PC-3 (cell line): ENCODE measurements at regions of chr1 and their contacts with region 1.

Region 1: DNA sequence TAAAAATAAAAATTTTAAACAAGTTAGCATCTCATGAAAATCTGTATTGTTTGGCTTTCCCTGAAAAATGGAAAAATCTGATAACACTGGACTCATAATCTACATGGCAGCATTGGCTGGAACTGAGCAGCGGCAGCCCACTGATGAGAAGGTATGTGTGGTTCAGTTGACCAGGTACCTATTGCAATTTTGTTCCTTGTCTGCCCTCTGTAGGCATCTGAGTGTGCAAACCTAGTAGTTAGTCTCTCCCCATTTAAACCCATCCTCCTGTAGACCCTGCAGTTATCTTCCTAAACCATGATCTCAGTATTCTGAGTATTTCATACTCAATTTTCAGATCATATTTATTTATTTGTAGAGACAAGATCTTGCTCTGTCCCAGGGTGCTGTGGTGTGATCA is 59.4 kb upstream of the SERBP1 start:
- DNase-seq: peak; percentile 42
- ATAC-seq: peak; percentile 86
- H3K4me3 ChIP-seq: no peak overlapping the region
- H3K27ac ChIP-seq: no peak overlapping the region
- H3K4me1 ChIP-seq: no peaks in the 10 kb centered on the region
- H3K27me3 ChIP-seq: no peaks in the 10 kb centered on the region
- CTCF ChIP-seq: peak; percentile 55; the same call in 1 of the 2 replicates

Region 2: DNA sequence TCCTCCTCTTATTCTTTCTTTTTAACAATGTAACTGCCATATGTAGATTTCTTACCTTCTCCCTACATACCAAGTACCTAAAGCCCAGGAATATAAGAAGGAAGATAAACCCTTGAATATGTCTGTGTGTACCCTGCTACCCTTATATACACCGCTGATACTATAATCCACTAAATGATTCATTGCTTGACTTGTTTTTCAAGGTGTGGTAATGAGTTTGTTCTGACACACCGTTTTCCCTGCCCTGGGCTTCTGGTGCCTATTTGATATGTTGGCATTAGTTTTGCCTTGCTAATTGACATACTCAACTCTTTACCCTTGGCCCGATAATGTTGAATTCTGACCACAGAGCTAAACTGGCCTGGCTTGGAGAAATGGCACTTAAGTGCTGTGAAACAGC is 259.1 kb before region 1 on chr1:
- CTCF ChIA-PET with region 1: interaction called, 4 read pairs
- POLR2A ChIA-PET with region 1: no interaction called
- intact Hi-C with region 1: loop called (anchors 1 kb)
- DNase-seq: peak; percentile 72
- ATAC-seq: peak; percentile 66
- H3K4me3 ChIP-seq: no peak overlapping the region
- H3K27ac ChIP-seq: peak overlapping the region; percentile 47
- H3K4me1 ChIP-seq: peaks cover 26% of the 10 kb centered on the region
- H3K27me3 ChIP-seq: no peaks in the 10 kb centered on the region
- CTCF ChIP-seq: no peak

Region 3: GRCh38 chr1:67599085-67599484 is 109.4 kb after region 1 on chr1:
- CTCF ChIA-PET with region 1: no interaction called
- POLR2A ChIA-PET with region 1: no interaction called
- intact Hi-C with region 1: no loop called
- DNase-seq: no peak
- ATAC-seq: peak; percentile 29; the same call in 1 of the 2 replicates
- H3K4me3 ChIP-seq: no peak overlapping the region
- H3K27ac ChIP-seq: no peak overlapping the region
- H3K4me1 ChIP-seq: no peaks in the 10 kb centered on the region
- H3K27me3 ChIP-seq: no peaks in the 10 kb centered on the region
- CTCF ChIP-seq: no peak